Activated B cell treated with CpG ODN at 0.5 μM for 24 hours (primary cell): ENCODE measurements at regions of chrX and their contacts with region 1.

Region 1: DNA sequence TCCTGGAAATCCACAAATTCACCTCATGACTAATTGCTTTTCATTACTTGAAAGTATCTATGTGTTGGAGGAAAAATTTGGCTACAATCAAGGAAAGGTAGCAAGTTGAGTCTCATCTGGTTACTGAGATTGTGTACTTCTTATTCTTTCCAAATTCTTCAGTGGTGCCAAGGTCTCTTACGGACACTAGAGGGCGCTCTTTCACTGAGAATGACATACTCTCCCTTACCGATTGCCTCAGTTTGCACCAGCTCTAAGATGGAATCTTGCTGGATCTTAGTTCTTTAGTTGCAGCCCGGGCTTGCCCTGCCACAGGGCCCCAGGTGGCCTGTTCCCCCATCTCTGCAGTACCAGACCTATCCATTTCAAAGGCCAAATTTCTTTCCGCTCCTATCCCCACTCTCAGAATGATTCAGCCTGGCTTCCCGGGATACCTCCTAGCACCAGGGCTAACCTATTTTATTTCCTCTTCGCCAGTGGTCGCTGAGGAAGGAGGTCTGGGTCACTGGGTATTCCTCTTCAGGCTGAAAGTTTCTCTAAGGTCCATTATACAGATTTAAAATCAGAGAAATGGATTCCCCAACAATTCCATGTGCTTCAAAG is 24.6 kb upstream of the GPR50 start:
- DNase-seq: no peak
- ATAC-seq: no peak
- H3K4me3 Mint-ChIP-seq: no peak overlapping the region
- H3K27ac Mint-ChIP-seq: no peak overlapping the region
- H3K4me1 Mint-ChIP-seq: no peaks in the 10 kb centered on the region
- H3K27me3 Mint-ChIP-seq: peaks cover 4% of the 10 kb centered on the region
- CTCF ChIP-seq: no peak

Region 2: DNA sequence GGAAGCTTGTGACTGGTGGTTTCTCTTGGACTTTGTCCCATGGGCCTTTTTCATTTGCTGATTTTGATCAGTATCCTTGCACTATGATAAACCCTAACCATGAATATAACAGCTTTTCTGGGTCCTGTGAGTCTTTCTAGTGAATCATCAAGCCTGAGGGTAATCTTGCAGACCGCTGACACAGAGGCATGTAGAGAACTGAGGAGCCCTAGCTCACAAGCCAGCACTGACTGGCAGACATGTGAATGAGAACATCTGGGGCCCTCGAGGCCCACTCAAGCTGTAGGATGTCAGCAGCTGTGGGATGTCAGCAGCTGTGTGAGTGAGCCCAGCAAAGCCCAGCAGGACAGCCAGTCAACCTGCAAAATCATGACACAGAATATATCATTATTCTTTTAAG is 131.9 kb before region 1 on chrX:
- CTCF ChIA-PET with region 1: no interaction called
- POLR2A ChIA-PET with region 1: no interaction called
- intact Hi-C with region 1: no loop called
- DNase-seq: no peak
- ATAC-seq: no peak
- H3K4me3 Mint-ChIP-seq: no peak overlapping the region
- H3K27ac Mint-ChIP-seq: no peak overlapping the region
- H3K4me1 Mint-ChIP-seq: no peaks in the 10 kb centered on the region
- H3K27me3 Mint-ChIP-seq: no peaks in the 10 kb centered on the region
- CTCF ChIP-seq: no peak

Region 3: GRCh38 chrX:151085207-151085606 is 66.6 kb before region 1 on chrX:
- CTCF ChIA-PET with region 1: no interaction called
- POLR2A ChIA-PET with region 1: no interaction called
- intact Hi-C with region 1: no loop called
- DNase-seq: no peak
- ATAC-seq: no peak
- H3K4me3 Mint-ChIP-seq: no peak overlapping the region
- H3K27ac Mint-ChIP-seq: no peak overlapping the region
- H3K4me1 Mint-ChIP-seq: peaks cover 6% of the 10 kb centered on the region
- H3K27me3 Mint-ChIP-seq: peaks cover 9% of the 10 kb centered on the region
- CTCF ChIP-seq: no peak

Region 4: GRCh38 chrX:151359931-151360871 is 208.4 kb after region 1 on chrX:
- CTCF ChIA-PET with region 1: no interaction called
- POLR2A ChIA-PET with region 1: no interaction called
- intact Hi-C with region 1: loop called (anchors 5 kb)
- DNase-seq: peak; percentile 14
- ATAC-seq: no peak
- H3K4me3 Mint-ChIP-seq: no peak overlapping the region
- H3K27ac Mint-ChIP-seq: no peak overlapping the region
- H3K4me1 Mint-ChIP-seq: peaks cover 3% of the 10 kb centered on the region
- H3K27me3 Mint-ChIP-seq: peaks cover 9% of the 10 kb centered on the region
- CTCF ChIP-seq: no peak

Region 5: DNA sequence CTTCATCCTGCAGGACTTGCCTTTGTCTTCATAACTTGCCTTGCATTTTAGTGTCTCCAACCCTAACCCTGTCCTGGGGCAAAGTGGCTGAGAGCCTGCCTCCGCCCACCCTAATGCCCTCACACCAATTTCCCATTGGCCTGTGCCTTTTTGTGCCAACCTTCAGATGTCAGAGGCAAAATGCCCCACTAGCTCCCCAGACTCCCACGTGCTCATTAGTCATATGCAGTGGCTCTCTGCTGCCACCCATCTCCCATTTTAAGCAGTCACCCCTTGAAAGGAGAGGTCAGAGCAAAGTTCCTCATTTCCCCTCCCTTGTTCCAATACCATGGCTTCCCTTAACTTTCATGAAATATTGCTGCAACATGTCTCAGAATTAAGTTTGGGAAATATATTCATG is 336.9 kb after region 1 on chrX:
- CTCF ChIA-PET with region 1: interaction called, 3 read pairs
- POLR2A ChIA-PET with region 1: no interaction called
- intact Hi-C with region 1: loop called (anchors 5 kb)
- DNase-seq: no peak
- ATAC-seq: no peak
- H3K4me3 Mint-ChIP-seq: no peak overlapping the region
- H3K27ac Mint-ChIP-seq: no peak overlapping the region
- H3K4me1 Mint-ChIP-seq: no peaks in the 10 kb centered on the region
- H3K27me3 Mint-ChIP-seq: no peaks in the 10 kb centered on the region
- CTCF ChIP-seq: no peak

Region 6: GRCh38 chrX:152878976-152879755 is 1727.4 kb after region 1 on chrX:
- CTCF ChIA-PET with region 1: no interaction called
- POLR2A ChIA-PET with region 1: no interaction called
- intact Hi-C with region 1: no loop called
- DNase-seq: no peak
- ATAC-seq: no peak
- H3K4me3 Mint-ChIP-seq: no peak overlapping the region
- H3K27ac Mint-ChIP-seq: no peak overlapping the region
- H3K4me1 Mint-ChIP-seq: no peaks in the 10 kb centered on the region
- H3K27me3 Mint-ChIP-seq: no peaks in the 10 kb centered on the region
- CTCF ChIP-seq: no peak